CD14-positive monocyte (primary cell): ENCODE measurements at regions of chr13 and their contacts with region 1.

Region 1: DNA sequence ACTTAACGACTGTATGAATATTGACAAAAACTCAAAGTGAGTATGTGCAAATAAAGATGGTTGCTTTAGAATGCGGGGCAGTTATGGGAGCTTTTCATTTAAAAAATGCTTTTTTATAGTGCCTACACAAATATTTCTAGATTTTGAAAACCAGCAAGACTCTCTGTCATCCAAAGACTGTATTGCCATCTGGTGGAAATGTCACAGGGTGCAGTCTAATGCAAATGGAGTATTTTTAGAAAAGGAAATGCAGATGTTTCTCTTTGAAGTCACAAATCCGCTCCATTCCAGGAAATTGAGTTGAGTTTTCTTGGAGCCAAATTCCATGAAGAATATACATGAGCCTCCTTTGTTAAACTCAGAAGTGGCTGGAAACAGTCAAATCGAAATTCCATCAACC is 2.3 kb upstream of the C1QTNF9B start:
- DNase-seq: no peak
- H3K4me3 ChIP-seq: no peak overlapping the region
- H3K4me3 Mint-ChIP-seq: no peak overlapping the region
- H3K27ac ChIP-seq: no peak overlapping the region
- H3K27ac Mint-ChIP-seq: no peak overlapping the region
- H3K4me1 ChIP-seq: peaks cover 5 to 7% of the 10 kb centered on the region in 2 donors
- H3K4me1 Mint-ChIP-seq: peaks cover 8% of the 10 kb centered on the region
- H3K27me3 ChIP-seq: peaks cover 32 to 33% of the 10 kb centered on the region in 2 donors
- H3K27me3 Mint-ChIP-seq: peaks cover 31 to 41% (median 35%) of the 10 kb centered on the region in 3 donors
- CTCF ChIP-seq: peak; percentile 66

Region 2: DNA sequence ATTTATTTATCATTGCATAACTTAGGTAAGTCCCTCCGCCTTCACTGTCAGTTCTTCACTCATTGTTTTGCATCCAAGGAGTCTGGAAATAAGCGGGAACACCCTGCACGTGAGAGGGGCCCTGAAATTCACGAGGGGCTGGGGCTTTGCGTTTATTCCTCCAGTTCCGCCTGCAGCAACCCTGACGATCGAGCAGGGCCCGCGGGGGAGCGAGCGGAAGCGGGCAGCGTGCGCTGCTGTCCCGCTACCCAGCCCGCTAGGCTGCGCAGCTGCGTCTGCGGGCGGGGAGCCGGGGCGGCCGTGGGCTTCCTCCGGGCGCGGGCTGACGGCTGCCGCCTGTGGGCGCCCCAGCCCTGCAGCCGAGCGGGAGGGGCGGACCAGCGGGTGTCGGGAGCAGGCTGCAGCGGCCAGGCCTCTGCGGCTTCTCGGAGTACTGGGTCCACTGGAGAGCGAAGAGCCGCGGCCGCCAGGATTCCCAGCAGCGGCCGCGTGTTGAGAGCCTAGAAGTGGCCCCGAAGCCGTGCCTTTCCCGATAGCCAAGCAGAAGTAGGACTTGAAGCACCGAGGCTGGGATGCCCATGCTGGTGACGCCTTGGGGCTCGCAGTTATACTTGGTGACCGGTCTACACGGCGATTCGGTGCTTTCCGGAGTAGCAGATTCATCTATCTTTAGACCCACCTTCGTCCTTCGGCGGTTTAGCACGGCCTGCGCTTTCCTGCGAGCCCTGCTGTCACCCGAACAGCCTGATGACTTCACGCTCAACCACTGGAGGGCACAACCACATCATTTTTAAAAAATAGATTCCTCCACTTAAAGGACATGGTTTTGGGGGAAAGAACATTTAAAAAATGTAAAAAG is 433.2 kb before region 1 on chr13:
- intact Hi-C with region 1: loop called in 1 of 2 experiments (anchors 10 kb)
- DNase-seq: peak; percentile 21 to 51 (median 45)
- H3K4me3 ChIP-seq: peak overlapping the region; percentile 17 to 72 (median 39)
- H3K4me3 Mint-ChIP-seq: peak overlapping the region; percentile 81 to 91
- H3K27ac ChIP-seq: no peak overlapping the region
- H3K27ac Mint-ChIP-seq: no peak overlapping the region
- H3K4me1 ChIP-seq: peaks cover 26 to 28% of the 10 kb centered on the region in 2 donors
- H3K4me1 Mint-ChIP-seq: peaks cover 34% of the 10 kb centered on the region
- H3K27me3 ChIP-seq: no peaks in the 10 kb centered on the region
- H3K27me3 Mint-ChIP-seq: peaks cover 2 to 7% (median 2%) of the 10 kb centered on the region in 3 donors
- CTCF ChIP-seq: peak; percentile 54